Spleen (tissue), 13 donors: ENCODE measurements at regions of chr22 and their contacts with region 1.

Region 1: GRCh38 chr22:36977947-36978660 is 41.1 kb downstream of the TST start:
- DNase-seq: peak; percentile 97
- H3K4me3 ChIP-seq: peak overlapping the region; percentile 3 to 66 (median 40)
- H3K27ac ChIP-seq: peak overlapping the region in 7 of 8 donors; percentile 59 to 88 (median 76)
- H3K4me1 ChIP-seq: peaks cover 0 to 19% (median 10%) of the 10 kb centered on the region in 6 donors
- H3K27me3 ChIP-seq: peaks cover 0 to 20% (median 0%) of the 10 kb centered on the region in 7 donors
- CTCF ChIP-seq: peak; percentile 92 to 98 (median 96)
- POLR2A ChIP-seq: no peak

Region 2: GRCh38 chr22:36781656-36782627 is 196.2 kb before region 1 on chr22:
- intact Hi-C with region 1: loop called (anchors 5 kb)
- DNase-seq: peak; percentile 95
- H3K4me3 ChIP-seq: no peak overlapping the region
- H3K27ac ChIP-seq: peak overlapping the region in 4 of 8 donors; percentile 21 to 66 (median 36)
- H3K4me1 ChIP-seq: peaks cover 4 to 18% (median 10%) of the 10 kb centered on the region in 6 donors
- H3K27me3 ChIP-seq: peaks cover 0 to 15% (median 0%) of the 10 kb centered on the region in 7 donors
- CTCF ChIP-seq: peak; percentile 92 to 99 (median 97)
- POLR2A ChIP-seq: no peak